ENCODE measurements at regions of chr13 and their contacts with region 1.

Region 1: GRCh38 chr13:77492982-77493381 is 42.5 kb upstream of the SCEL start:
- DNase-seq: no peak
- ATAC-seq: peak; percentile 79
- H3K4me3 Mint-ChIP-seq: no peak overlapping the region
- H3K27ac Mint-ChIP-seq: no peak overlapping the region
- H3K4me1 Mint-ChIP-seq: no peaks in the 10 kb centered on the region
- H3K27me3 Mint-ChIP-seq: peaks cover 3% of the 10 kb centered on the region
- CTCF ChIP-seq: no peak

Region 2: GRCh38 chr13:77397636-77398035 is 95.3 kb before region 1 on chr13:
- CTCF ChIA-PET with region 1: no interaction called
- POLR2A ChIA-PET with region 1: no interaction called
- intact Hi-C with region 1: no loop called
- DNase-seq: no peak
- ATAC-seq: no peak
- H3K4me3 Mint-ChIP-seq: no peak overlapping the region
- H3K27ac Mint-ChIP-seq: no peak overlapping the region
- H3K4me1 Mint-ChIP-seq: peaks cover 8% of the 10 kb centered on the region
- H3K27me3 Mint-ChIP-seq: no peaks in the 10 kb centered on the region
- CTCF ChIP-seq: no peak

Region 3: DNA sequence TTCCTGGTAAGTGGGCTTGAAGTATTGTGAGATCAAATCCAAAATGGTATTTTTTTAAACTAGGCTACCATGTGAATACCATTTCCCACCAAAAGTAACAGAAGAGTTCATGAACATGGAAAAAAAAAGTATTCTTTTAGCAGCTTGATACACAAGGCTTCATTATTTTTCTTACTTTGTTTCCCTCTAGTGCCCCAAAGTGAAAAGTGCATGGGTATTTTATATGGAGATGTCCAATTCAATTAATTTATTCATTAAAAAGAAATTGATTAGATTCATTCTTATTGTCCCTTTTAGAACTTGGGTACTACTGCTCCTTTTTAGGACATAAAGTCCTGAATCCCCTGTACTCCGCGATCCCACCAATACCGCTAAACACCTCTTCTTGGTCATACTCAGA is 13.9 kb after region 1 on chr13:
- CTCF ChIA-PET with region 1: interaction called, 45 read pairs
- POLR2A ChIA-PET with region 1: no interaction called
- intact Hi-C with region 1: loop called (anchors 1 kb)
- DNase-seq: no peak
- ATAC-seq: no peak
- H3K4me3 Mint-ChIP-seq: no peak overlapping the region
- H3K27ac Mint-ChIP-seq: no peak overlapping the region
- H3K4me1 Mint-ChIP-seq: peaks cover 27% of the 10 kb centered on the region
- H3K27me3 Mint-ChIP-seq: peaks cover 7% of the 10 kb centered on the region
- CTCF ChIP-seq: no peak

Region 4: DNA sequence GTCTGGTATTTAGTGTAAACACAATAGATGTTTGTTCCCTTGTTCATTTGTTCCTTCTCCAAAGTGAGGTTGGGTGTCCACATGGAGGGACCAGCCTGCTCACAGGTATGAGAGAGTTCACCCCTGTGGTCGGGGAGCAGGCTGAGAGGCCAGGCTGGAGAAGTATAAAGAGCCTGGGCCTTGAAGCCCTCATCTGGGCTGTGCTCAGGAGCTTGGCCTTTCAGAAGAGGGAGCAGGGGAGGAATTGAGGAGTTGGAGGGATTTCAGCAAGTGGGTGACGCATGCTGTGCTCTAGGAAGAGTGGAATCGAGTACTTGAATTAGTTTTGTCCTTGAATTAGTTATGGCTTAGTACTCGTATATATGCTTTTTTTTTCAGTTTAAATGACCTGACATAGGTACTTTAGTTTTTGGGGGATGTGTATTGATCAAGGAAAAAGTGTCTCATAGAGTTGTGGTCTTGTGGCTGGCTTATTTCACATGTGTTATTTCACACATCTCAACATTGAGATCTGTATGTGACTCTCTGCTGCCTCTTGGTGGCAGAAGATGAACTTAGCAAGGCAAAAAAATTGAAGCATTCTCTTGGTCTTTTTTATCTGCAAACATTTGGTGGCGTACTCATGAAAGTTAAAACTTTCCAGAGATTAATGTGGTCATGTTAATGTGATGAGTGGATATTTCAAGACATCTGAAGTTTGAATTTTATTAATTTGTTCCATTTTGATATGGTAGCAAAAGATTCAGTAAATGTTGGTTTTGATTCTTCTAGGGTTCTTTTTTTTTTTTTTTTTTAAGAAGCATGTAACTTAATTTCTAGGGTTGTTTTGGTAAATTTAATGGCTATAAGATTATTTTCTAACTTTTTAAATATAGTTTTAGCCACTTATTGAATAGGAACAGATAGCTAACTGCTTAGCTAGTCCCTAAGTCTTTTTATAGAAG is 258.8 kb after region 1 on chr13:
- CTCF ChIA-PET with region 1: interaction called, 10 read pairs
- POLR2A ChIA-PET with region 1: no interaction called
- intact Hi-C with region 1: loop called (anchors 1 kb)
- DNase-seq: no peak
- ATAC-seq: peak; percentile 69
- H3K4me3 Mint-ChIP-seq: no peak overlapping the region
- H3K27ac Mint-ChIP-seq: no peak overlapping the region
- H3K4me1 Mint-ChIP-seq: no peaks in the 10 kb centered on the region
- H3K27me3 Mint-ChIP-seq: no peaks in the 10 kb centered on the region
- CTCF ChIP-seq: peak; percentile 91